ENCODE measurements at regions of chr13 and their contacts with region 1.

Region 1: GRCh38 chr13:21176220-21176982 is at the starts of genes MRPL57 and SKA3:
- DNase-seq: peak; percentile 96
- ATAC-seq: peak; percentile 87
- H3K4me3 ChIP-seq: peak within 1 kb of the TSS; percentile 92
- H3K27ac ChIP-seq: peak within 1 kb of the TSS; percentile 81
- H3K4me1 ChIP-seq: peaks cover 17% of the 10 kb centered on the region; the same call in 1 of the 2 replicates
- H3K27me3 ChIP-seq: no peaks in the 10 kb centered on the region
- CTCF ChIP-seq: no peak
- total RNA-seq, gene MRPL57: 56.4 and 92.3 TPM in 2 replicates
- total RNA-seq, gene SKA3: 29.0 and 32.4 TPM in 2 replicates

Region 2: GRCh38 chr13:21111546-21111945 is 64.9 kb before region 1 on chr13:
- CTCF ChIA-PET with region 1: interaction called, 5 read pairs
- POLR2A ChIA-PET with region 1: no interaction called
- intact Hi-C with region 1: loop called (anchors 1 kb)
- DNase-seq: no peak
- ATAC-seq: no peak
- H3K4me3 ChIP-seq: no peak overlapping the region
- H3K27ac ChIP-seq: no peak overlapping the region
- H3K4me1 ChIP-seq: peaks cover under 1% of the 10 kb centered on the region; the same call in 1 of the 2 replicates
- H3K27me3 ChIP-seq: no peaks in the 10 kb centered on the region
- CTCF ChIP-seq: no peak